IMR-90 (cell line): ENCODE measurements at regions of chr11 and their contacts with region 1.

Region 1: GRCh38 chr11:32983506-32983905 is 32.2 kb upstream of the DEPDC7 start:
- DNase-seq: no peak
- ATAC-seq: peak; percentile 29; the same call in 1 of the 2 replicates
- H3K4me3 ChIP-seq: no peak overlapping the region
- H3K27ac ChIP-seq: no peak overlapping the region
- H3K4me1 ChIP-seq: peaks cover 6% of the 10 kb centered on the region
- H3K27me3 ChIP-seq: no peaks in the 10 kb centered on the region
- CTCF ChIP-seq: no peak
- POLR2A ChIP-seq: no peak
- RAD21 ChIP-seq: no peak

Region 2: DNA sequence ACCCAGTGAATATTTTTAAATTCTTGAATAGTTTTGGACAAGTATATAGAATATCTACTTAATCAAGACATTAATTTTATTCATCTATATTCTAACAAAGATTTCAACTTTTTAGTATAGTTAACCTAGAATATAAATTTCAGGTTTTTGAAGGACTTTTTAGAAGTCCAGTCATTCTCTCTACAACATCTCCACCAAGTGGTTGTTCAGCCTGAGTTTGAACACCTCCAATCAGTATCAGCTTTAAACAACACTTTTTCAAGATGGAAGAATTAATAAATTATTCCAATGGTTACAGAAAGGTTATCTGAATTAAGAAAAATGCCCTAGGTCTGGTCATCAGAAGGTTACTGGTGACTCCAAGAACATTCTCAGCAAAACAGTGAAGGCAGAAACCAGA is 368.1 kb before region 1 on chr11:
- CTCF ChIA-PET with region 1: no interaction called
- POLR2A ChIA-PET with region 1: no interaction called
- dilution Hi-C with region 1: no loop called
- in situ Hi-C with region 1: no loop called
- intact Hi-C with region 1: no loop called
- DNase-seq: no peak
- ATAC-seq: no peak
- H3K4me3 ChIP-seq: no peak overlapping the region
- H3K27ac ChIP-seq: no peak overlapping the region
- H3K4me1 ChIP-seq: no peaks in the 10 kb centered on the region
- H3K27me3 ChIP-seq: no peaks in the 10 kb centered on the region
- CTCF ChIP-seq: peak; percentile 26; the same call in 1 of the 2 replicates
- POLR2A ChIP-seq: no peak
- RAD21 ChIP-seq: no peak; the same call in 1 of the 2 replicates

Region 3: GRCh38 chr11:32775908-32776307 is 207.6 kb before region 1 on chr11:
- CTCF ChIA-PET with region 1: no interaction called
- POLR2A ChIA-PET with region 1: no interaction called
- dilution Hi-C with region 1: no loop called
- in situ Hi-C with region 1: no loop called
- intact Hi-C with region 1: no loop called
- DNase-seq: no peak
- ATAC-seq: no peak
- H3K4me3 ChIP-seq: no peak overlapping the region
- H3K27ac ChIP-seq: no peak overlapping the region
- H3K4me1 ChIP-seq: no peaks in the 10 kb centered on the region
- H3K27me3 ChIP-seq: no peaks in the 10 kb centered on the region
- CTCF ChIP-seq: no peak
- POLR2A ChIP-seq: no peak
- RAD21 ChIP-seq: no peak

Region 4: GRCh38 chr11:33033493-33033892 is 50.0 kb after region 1 on chr11:
- CTCF ChIA-PET with region 1: no interaction called
- POLR2A ChIA-PET with region 1: no interaction called
- dilution Hi-C with region 1: no loop called
- in situ Hi-C with region 1: no loop called
- intact Hi-C with region 1: loop called (anchors 5 kb)
- DNase-seq: no peak
- ATAC-seq: no peak
- H3K4me3 ChIP-seq: no peak overlapping the region
- H3K27ac ChIP-seq: no peak overlapping the region
- H3K4me1 ChIP-seq: peaks cover under 1% of the 10 kb centered on the region; the same call in 1 of the 2 replicates
- H3K27me3 ChIP-seq: no peaks in the 10 kb centered on the region
- CTCF ChIP-seq: no peak
- POLR2A ChIP-seq: no peak
- RAD21 ChIP-seq: no peak